ENCODE measurements at regions of chr2 and their contacts with region 1.

Region 1: GRCh38 chr2:16608661-16609643 is 56.7 kb downstream of the CYRIA start:
- DNase-seq: peak; percentile 71
- H3K27ac ChIP-seq: no peak overlapping the region
- CTCF ChIP-seq: peak; percentile 88

Region 2: GRCh38 chr2:16553226-16553625 is 55.7 kb before region 1 on chr2:
- CTCF ChIA-PET with region 1: interaction called, 10 read pairs
- POLR2A ChIA-PET with region 1: no interaction called
- DNase-seq: peak; percentile 15
- H3K27ac ChIP-seq: no peak overlapping the region
- CTCF ChIP-seq: peak; percentile 24; the same call in 1 of the 2 replicates

Region 3: DNA sequence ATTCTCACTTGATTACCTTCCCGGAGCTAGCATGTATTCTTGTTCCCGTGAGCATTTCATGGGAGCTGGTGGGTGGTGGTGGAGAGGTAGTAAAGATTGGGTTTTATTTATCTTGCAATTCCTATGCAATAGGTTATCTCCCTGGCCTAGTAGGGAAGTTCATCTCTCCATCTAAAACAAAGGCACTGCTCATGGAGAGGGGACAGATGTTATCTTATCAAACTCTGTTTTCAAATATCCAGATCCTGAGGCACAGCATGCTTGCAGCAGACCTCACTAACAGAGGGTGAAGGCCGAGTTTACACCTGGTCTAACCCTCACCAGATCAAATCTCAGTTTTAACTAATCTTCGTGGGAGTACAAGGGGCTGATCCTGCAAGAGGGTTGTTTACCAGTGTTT is 42.3 kb before region 1 on chr2:
- CTCF ChIA-PET with region 1: no interaction called
- POLR2A ChIA-PET with region 1: no interaction called
- DNase-seq: no peak
- H3K27ac ChIP-seq: no peak overlapping the region
- CTCF ChIP-seq: no peak

Region 4: GRCh38 chr2:16591370-16591933 is 17.5 kb before region 1 on chr2:
- CTCF ChIA-PET with region 1: no interaction called
- POLR2A ChIA-PET with region 1: no interaction called
- DNase-seq: no peak
- H3K27ac ChIP-seq: no peak overlapping the region
- CTCF ChIP-seq: no peak

Region 5: GRCh38 chr2:16644221-16644925 is 35.4 kb after region 1 on chr2:
- CTCF ChIA-PET with region 1: no interaction called
- POLR2A ChIA-PET with region 1: no interaction called
- DNase-seq: no peak
- H3K27ac ChIP-seq: no peak overlapping the region
- CTCF ChIP-seq: no peak